ENCODE measurements at regions of chr7 and their contacts with region 1.

Region 1: DNA sequence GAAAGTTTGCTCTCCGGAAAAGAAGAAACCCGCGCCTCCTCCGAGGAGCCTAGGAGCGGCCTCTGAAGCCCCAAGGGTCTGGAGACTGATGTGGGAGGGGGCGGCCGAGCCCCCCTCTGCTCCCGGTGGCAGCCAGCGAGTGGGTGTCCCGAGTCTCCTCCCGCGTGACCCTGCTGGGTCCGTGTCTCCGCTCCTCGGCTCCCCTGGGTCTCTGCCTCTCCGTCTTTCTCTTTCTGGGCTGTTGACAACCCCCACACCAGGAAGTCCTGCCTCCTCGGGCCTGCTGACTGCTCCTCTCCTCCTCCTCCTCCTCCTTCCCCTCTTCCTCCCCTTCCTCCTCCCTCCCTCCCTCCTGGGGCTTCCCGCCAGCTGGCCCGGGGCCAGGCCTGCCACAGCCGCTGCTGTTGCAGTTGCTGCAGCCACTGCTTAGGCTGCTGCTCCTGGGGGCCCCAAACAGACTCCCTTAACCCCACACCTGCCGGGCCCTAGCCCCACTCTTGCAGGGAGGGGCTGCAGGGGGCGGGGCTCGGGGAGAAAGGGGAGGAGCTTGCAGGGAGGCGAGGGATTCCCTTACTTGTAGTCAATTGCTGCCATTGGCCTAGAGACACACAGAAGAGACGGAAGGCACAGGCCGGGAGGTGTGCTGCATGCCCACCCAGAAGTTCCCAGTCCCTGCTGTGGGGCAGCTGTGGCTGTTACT is at the start of gene TSC22D4:
- DNase-seq: peak; percentile 82
- ATAC-seq: peak; percentile 77
- H3K4me3 ChIP-seq: peak within 1 kb of the TSS; percentile 84
- H3K27ac ChIP-seq: no peak within 1 kb of the TSS
- H3K4me1 ChIP-seq: peaks cover 11% of the 10 kb centered on the region; the same call in 1 of the 2 replicates
- H3K27me3 ChIP-seq: no peaks in the 10 kb centered on the region
- CTCF ChIP-seq: no peak
- total RNA-seq, gene TSC22D4: 57.1 and 66.1 TPM in 2 replicates

Region 2: DNA sequence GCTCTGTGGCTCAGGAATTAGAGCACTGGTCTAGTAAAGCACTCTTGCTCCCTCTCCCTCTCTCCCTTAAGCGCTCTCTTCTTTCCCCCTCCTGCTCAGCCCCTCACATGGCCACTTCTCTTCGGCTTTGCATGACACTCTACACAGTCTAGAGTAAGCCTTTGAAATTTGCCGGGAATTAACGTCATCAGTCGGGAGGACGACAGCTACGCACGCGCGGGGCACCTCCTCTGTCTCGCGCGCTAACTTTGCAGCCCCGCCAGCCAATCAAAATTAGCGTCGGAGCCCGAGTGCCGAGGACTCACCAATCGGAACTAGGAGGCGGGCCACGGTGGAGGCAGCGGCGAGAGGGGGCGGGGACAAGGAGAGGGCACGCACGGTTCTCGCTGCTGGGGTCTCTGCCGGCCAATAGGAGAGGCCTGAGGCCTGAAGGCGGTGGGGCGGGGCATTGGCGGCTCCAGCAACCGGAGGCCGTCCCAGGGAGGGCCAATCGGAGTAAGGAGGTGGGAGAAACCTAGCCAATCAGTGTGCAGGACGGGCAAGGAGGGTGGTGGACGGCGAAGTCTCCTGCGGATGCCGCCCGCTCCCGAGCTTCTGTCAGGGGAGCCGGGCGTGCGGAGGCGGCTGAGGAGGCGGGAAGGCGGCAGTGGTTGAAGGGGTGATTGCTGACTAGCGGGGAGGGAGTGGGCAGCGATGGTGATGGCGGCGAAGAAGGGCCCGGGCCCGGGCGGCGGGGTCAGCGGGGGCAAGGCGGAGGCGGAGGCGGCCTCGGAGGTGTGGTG is 59.7 kb after region 1 on chr7 and contains the start of gene AGFG2:
- CTCF ChIA-PET with region 1: interaction called, 13 read pairs
- POLR2A ChIA-PET with region 1: no interaction called
- intact Hi-C with region 1: loop called (anchors 2 kb)
- DNase-seq: peak; percentile 99
- ATAC-seq: peak; percentile 97
- H3K4me3 ChIP-seq: peak within 1 kb of the TSS; percentile 78
- H3K27ac ChIP-seq: 0 out of 2 replicates have a peak within 1 kb of the TSS, but pooled peaks have one; percentile 2
- H3K4me1 ChIP-seq: peaks cover 13% of the 10 kb centered on the region
- H3K27me3 ChIP-seq: no peaks in the 10 kb centered on the region
- CTCF ChIP-seq: no peak
- total RNA-seq, gene AGFG2: 16.9 and 18.2 TPM in 2 replicates

Region 3: GRCh38 chr7:100578338-100579183 is 99.4 kb after region 1 on chr7:
- CTCF ChIA-PET with region 1: no interaction called
- POLR2A ChIA-PET with region 1: no interaction called
- intact Hi-C with region 1: no loop called
- DNase-seq: no peak
- ATAC-seq: no peak
- H3K4me3 ChIP-seq: no peak overlapping the region
- H3K27ac ChIP-seq: no peak overlapping the region
- H3K4me1 ChIP-seq: peaks cover 3% of the 10 kb centered on the region
- H3K27me3 ChIP-seq: no peaks in the 10 kb centered on the region
- CTCF ChIP-seq: no peak

Measured in PC-3 (cell line).